ENCODE measurements at regions of chrX and their contacts with region 1.

Region 1: GRCh38 chrX:111600341-111600740 is 80.6 kb upstream of the ALG13 start:
- DNase-seq: no peak
- H3K4me3 ChIP-seq: no peak overlapping the region
- H3K27ac ChIP-seq: no peak overlapping the region
- H3K4me1 ChIP-seq: no peaks in the 10 kb centered on the region
- H3K27me3 ChIP-seq: no peaks in the 10 kb centered on the region
- CTCF ChIP-seq: no peak
- EP300 ChIP-seq: no peak
- POLR2A ChIP-seq: no peak

Region 2: DNA sequence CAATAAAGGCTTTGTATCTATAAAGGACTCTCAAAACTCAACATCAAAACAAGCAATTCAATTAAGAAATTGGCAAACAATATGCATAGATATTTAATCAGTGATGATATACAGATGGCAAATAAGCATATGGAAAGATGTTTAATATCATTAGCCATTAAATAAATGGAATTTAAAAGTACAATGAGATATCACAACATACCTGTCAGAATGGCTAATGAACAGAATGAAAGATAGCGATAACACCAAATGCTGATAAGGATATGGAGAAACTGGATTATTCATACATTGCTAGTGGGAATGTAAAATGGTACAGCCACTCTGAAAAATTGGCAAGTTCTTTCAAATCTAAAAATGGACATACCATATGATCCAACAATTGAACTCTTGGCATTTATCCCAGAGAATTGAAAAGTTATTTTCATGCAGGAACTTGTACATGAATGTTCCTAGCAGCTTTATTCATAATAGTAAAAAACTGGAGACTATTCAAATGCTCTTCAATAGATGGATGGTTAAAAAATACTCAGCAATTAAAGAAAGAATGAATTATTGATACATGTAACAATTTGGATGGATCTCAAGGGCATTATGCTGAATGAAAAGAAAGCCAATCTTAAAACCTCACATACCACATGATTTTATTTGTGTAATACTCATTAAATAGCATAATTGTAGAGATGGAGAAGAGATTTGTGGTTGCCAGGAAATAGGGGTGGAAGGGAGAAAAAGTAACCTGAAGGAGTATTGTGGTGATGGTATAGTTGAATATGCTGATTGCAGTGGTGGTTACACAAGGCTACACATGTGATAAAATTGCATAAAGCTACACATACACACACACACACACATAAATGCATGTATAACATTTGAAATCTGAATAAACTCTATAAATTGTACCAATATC is 34.7 kb after region 1 on chrX:
- intact Hi-C with region 1: loop called in 1 of 4 experiments (anchors 1 kb)
- DNase-seq: no peak
- H3K4me3 ChIP-seq: no peak overlapping the region
- H3K27ac ChIP-seq: no peak overlapping the region
- H3K4me1 ChIP-seq: no peaks in the 10 kb centered on the region
- H3K27me3 ChIP-seq: no peaks in the 10 kb centered on the region
- CTCF ChIP-seq: no peak
- EP300 ChIP-seq: no peak
- POLR2A ChIP-seq: no peak

Region 3: DNA sequence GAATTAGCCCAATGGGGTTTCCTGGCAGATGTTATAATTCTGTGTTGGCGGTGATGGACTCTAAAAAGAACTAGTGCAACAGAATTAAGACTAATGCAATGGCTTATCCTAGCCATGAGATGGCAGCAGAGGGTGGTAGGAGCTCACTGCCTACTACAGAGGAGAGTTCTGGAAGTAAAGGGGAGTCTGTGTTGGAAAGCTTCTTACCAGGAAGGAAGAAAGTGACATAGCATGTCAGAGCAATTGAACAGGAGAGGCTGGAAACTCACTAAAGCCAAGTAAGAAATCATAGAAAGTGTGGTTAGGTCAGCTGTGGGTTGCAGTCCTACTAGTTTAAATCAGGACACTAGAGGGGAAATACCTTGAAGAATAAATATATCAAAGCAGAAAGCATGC is 269.3 kb after region 1 on chrX:
- intact Hi-C with region 1: no loop called
- DNase-seq: peak in 1 of 5 donors; percentile 18
- H3K4me3 ChIP-seq: no peak overlapping the region
- H3K27ac ChIP-seq: no peak overlapping the region
- H3K4me1 ChIP-seq: no peaks in the 10 kb centered on the region
- H3K27me3 ChIP-seq: no peaks in the 10 kb centered on the region
- CTCF ChIP-seq: peak in 1 of 3 donors; percentile 19
- EP300 ChIP-seq: no peak
- POLR2A ChIP-seq: no peak

Measured in ovary (tissue), 10 donors.